ENCODE measurements at regions of chr20 and their contacts with region 1.

Region 1: DNA sequence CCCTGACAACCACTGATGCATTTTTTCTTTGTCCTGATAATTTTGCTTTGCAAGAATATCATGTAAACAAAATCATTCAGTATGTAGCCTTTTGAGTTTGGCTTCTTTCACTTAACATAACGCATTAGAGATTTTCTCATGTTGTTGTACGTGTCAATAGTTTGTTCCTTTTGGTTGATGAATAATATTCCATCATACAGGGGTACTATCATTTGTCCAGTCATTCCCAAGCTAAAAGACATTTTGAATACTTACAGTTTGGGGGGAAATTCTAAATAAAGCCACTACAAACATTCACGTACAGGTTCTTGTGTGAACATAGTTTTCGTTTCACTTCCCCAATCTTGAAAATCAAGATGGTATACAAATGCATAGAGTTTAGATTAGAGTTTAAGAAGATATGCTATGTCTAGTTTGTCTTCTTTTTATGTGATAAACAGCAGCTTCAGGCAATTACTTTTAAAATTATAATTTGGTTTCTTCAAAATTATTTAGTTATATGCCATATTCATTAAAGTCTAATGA is 5.2 kb downstream of the HAO1 start:
- DNase-seq: no peak
- ATAC-seq: no peak
- H3K4me3 ChIP-seq: no peak overlapping the region
- H3K4me3 Mint-ChIP-seq: no peak overlapping the region
- H3K27ac ChIP-seq: no peak overlapping the region
- H3K27ac Mint-ChIP-seq: no peak overlapping the region
- H3K4me1 ChIP-seq: no peaks in the 10 kb centered on the region
- H3K4me1 Mint-ChIP-seq: peaks cover 0 to 2% (median 0%) of the 10 kb centered on the region in 7 donors
- H3K27me3 ChIP-seq: peaks cover 0 to 5% of the 10 kb centered on the region in 2 donors
- H3K27me3 Mint-ChIP-seq: peaks cover 6 to 42% (median 23%) of the 10 kb centered on the region in 5 donors

Region 2: GRCh38 chr20:7897781-7898364 is 37.2 kb before region 1 on chr20:
- CTCF ChIA-PET with region 1: no interaction called
- POLR2A ChIA-PET with region 1: no interaction called
- intact Hi-C with region 1: no loop called
- DNase-seq: no peak
- ATAC-seq: no peak
- H3K4me3 ChIP-seq: no peak overlapping the region
- H3K4me3 Mint-ChIP-seq: no peak overlapping the region
- H3K27ac ChIP-seq: no peak overlapping the region
- H3K27ac Mint-ChIP-seq: no peak overlapping the region
- H3K4me1 ChIP-seq: no peaks in the 10 kb centered on the region
- H3K4me1 Mint-ChIP-seq: peaks cover 0 to 5% (median 0%) of the 10 kb centered on the region in 7 donors
- H3K27me3 ChIP-seq: no peaks in the 10 kb centered on the region
- H3K27me3 Mint-ChIP-seq: peaks cover 0 to 7% (median 5%) of the 10 kb centered on the region in 5 donors

Region 3: DNA sequence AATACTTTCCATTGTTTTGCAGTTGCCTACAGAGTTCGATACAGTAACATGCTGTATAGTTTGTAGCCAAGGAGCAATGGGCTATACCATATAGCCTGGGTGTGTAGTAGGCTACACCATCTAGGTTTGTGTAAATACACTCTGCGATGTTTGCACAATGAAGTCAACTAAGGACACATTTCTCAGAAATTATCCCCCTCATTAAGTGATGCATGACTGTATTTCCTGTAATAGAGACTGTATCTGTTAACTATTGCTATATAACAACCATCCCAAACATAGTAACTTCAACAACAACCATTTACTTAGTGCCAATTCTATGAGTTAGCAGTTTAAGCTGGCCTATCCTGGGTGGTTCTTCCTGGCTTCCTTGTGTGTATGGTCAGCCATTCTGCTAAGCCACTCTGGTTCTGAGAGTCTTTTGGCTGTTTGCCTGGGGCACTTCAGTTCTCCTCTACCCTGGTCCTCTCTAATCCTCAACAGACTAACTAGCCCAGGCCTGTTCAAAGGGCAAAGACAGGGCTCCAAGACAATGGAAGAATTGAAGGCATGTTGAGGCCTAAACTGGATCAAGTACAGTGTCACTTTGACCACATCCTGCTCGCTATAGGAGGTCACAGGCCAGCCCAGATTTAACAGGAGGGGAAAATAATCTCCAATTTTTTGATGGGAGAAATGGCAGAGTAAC is 321.0 kb after region 1 on chr20:
- CTCF ChIA-PET with region 1: no interaction called
- POLR2A ChIA-PET with region 1: no interaction called
- intact Hi-C with region 1: no loop called
- DNase-seq: no peak
- ATAC-seq: no peak
- H3K4me3 ChIP-seq: no peak overlapping the region
- H3K4me3 Mint-ChIP-seq: no peak overlapping the region
- H3K27ac ChIP-seq: no peak overlapping the region
- H3K27ac Mint-ChIP-seq: peak overlapping the region in 1 of 9 donors; percentile 26
- H3K4me1 ChIP-seq: no peaks in the 10 kb centered on the region
- H3K4me1 Mint-ChIP-seq: peaks cover 0 to 3% (median 0%) of the 10 kb centered on the region in 7 donors
- H3K27me3 ChIP-seq: no peaks in the 10 kb centered on the region
- H3K27me3 Mint-ChIP-seq: no peaks in the 10 kb centered on the region

Region 4: DNA sequence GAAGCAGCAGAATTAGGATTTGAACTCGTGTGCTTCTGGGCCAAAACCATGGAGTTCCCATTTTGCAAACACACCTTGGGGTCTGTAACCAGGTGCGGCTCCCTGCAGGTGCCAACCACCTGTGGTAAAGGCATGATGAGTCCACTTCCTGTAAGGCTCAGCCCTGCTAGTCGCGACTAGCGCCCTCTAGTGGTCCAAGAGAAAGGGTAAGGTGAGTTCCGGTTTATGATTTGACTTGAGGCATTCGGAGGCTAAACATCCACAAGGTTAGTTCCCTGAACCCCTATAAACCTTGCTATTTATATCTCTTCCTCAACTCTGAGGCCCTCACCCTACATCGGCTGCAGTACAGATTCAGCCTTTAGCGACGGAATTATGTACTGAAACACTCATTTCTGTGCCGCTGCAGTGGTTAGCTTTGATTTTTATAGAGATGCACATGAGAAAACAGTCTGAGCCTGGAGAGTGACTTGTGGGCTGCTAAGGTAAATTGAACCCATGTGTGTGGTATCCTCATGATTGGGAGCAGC is 370.4 kb after region 1 on chr20:
- CTCF ChIA-PET with region 1: no interaction called
- POLR2A ChIA-PET with region 1: no interaction called
- intact Hi-C with region 1: loop called in 1 of 2 experiments (anchors 10 kb)
- DNase-seq: peak; percentile 36 to 78 (median 64)
- ATAC-seq: peak; percentile 95
- H3K4me3 ChIP-seq: no peak overlapping the region
- H3K4me3 Mint-ChIP-seq: peak overlapping the region in 2 of 10 donors; percentile 28 to 45
- H3K27ac ChIP-seq: no peak overlapping the region
- H3K27ac Mint-ChIP-seq: no peak overlapping the region
- H3K4me1 ChIP-seq: peaks cover 0 to 8% of the 10 kb centered on the region in 2 donors
- H3K4me1 Mint-ChIP-seq: peaks cover 0 to 8% (median 0%) of the 10 kb centered on the region in 7 donors
- H3K27me3 ChIP-seq: no peaks in the 10 kb centered on the region
- H3K27me3 Mint-ChIP-seq: no peaks in the 10 kb centered on the region

Region 5: GRCh38 chr20:8431538-8432434 is 496.7 kb after region 1 on chr20:
- CTCF ChIA-PET with region 1: no interaction called
- POLR2A ChIA-PET with region 1: no interaction called
- intact Hi-C with region 1: no loop called
- DNase-seq: no peak
- ATAC-seq: no peak
- H3K4me3 ChIP-seq: no peak overlapping the region
- H3K4me3 Mint-ChIP-seq: no peak overlapping the region
- H3K27ac ChIP-seq: no peak overlapping the region
- H3K27ac Mint-ChIP-seq: no peak overlapping the region
- H3K4me1 ChIP-seq: peaks cover 0 to 6% of the 10 kb centered on the region in 2 donors
- H3K4me1 Mint-ChIP-seq: no peaks in the 10 kb centered on the region
- H3K27me3 ChIP-seq: no peaks in the 10 kb centered on the region
- H3K27me3 Mint-ChIP-seq: peaks cover 0 to 4% (median 0%) of the 10 kb centered on the region in 5 donors